ENCODE measurements at regions of chr19 and their contacts with region 1.

Region 1: DNA sequence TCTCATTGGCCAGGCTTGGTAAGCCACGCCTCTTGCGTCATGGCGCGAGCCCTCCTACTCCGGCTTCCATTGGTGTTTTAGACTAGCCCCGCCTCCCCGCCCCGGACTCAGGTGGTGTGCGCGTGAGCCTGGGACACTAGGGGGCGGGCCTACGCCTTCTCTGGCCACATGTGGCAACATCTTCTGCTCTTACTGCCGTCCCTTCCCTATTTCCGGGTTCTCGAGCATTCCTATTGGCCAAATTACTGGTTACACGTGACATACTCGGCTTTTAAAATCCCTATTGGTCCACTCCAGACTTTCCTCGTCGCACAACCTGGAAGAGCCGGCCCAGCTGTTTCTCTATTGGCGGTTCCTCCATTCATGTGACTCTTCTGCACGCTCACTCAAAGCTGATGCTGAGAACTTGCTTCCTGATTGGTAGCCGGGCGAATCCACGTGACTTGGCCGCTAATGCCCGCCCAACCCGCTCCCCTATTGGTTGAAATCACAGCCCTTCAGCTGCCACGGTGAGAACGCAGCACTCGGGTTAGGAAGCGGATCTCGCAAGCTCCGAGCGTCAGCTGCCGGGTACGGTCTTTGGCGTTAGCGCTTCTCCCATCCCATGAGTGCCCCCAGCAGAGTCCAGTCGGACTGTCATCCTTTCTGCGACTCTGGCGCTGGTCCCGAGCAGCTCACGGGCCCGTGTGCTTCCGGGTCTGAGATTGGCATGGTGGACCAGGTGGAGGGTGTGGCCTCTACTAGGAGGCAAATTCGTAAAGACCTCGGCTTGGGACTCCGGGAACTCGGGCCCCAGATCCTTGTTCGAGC is at the start of gene BLOC1S3:
- DNase-seq: peak; percentile 99 to 100 (median 100)
- ATAC-seq: peak; percentile 87
- H3K4me3 ChIP-seq: peak within 1 kb of the TSS; percentile 94 to 95
- H3K4me3 Mint-ChIP-seq: peak within 1 kb of the TSS; percentile 94
- H3K27ac ChIP-seq: peak within 1 kb of the TSS; percentile 87 to 93
- H3K27ac Mint-ChIP-seq: peak within 1 kb of the TSS; percentile 98
- H3K4me1 ChIP-seq: peaks cover 37% of the 10 kb centered on the region
- H3K4me1 Mint-ChIP-seq: peaks cover 43% of the 10 kb centered on the region
- H3K27me3 ChIP-seq: no peaks in the 10 kb centered on the region
- H3K27me3 Mint-ChIP-seq: no peaks in the 10 kb centered on the region
- CTCF ChIP-seq: no peak
- total RNA-seq, gene BLOC1S3: 17.7 to 21.6 TPM

Region 2: GRCh38 chr19:44890366-44891015 is 288.0 kb before region 1 on chr19:
- CTCF ChIA-PET with region 1: no interaction called
- POLR2A ChIA-PET with region 1: no interaction called
- intact Hi-C with region 1: loop called (anchors 1 kb)
- DNase-seq: peak in 4 of 9 experiments; percentile 100
- ATAC-seq: peak; percentile 78
- H3K4me3 ChIP-seq: peak overlapping the region; percentile 58 to 76
- H3K4me3 Mint-ChIP-seq: peak overlapping the region; percentile 85
- H3K27ac ChIP-seq: peak overlapping the region; percentile 89 to 98
- H3K27ac Mint-ChIP-seq: peak overlapping the region; percentile 94
- H3K4me1 ChIP-seq: peaks cover 20% of the 10 kb centered on the region
- H3K4me1 Mint-ChIP-seq: peaks cover 27% of the 10 kb centered on the region
- H3K27me3 ChIP-seq: no peaks in the 10 kb centered on the region
- H3K27me3 Mint-ChIP-seq: no peaks in the 10 kb centered on the region
- CTCF ChIP-seq: no peak

Region 3: DNA sequence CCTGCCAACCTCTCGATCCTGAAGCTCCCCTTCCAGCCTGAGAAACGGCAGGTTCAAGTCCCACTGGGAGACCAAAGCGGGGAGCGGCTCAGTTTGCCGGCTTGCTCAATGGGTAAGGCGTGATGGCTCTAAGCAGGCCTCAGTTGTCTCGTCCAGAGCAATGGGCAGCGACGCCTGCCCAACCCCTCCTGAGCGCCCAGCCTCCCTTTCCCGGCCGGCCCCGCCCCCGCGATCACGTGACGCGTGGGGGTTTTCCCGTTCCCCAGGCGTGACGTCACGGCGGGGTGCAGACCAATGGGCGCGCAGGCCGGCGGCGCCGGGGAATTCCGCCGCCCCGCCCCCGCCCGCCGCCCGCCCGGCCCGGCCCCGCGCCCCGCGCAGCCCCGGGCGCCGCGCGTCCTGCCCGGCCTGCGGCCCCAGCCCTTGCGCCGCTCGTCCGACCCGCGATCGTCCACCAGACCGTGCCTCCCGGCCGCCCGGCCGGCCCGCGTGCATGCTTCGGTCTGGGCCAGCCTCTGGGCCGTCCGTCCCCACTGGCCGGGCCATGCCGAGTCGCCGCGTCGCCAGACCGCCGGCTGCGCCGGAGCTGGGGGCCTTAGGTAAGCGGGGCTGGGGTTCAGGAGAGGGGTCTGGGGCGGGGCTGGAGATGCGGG is 177.3 kb before region 1 on chr19 and contains the start of gene RELB:
- CTCF ChIA-PET with region 1: no interaction called
- POLR2A ChIA-PET with region 1: interaction called, 5 read pairs
- intact Hi-C with region 1: loop called (anchors 1 kb)
- DNase-seq: peak; percentile 92 to 98 (median 95)
- ATAC-seq: peak; percentile 49
- H3K4me3 ChIP-seq: peak within 1 kb of the TSS; percentile 58 to 98
- H3K4me3 Mint-ChIP-seq: peak within 1 kb of the TSS; percentile 96
- H3K27ac ChIP-seq: peak within 1 kb of the TSS; percentile 98 to 100
- H3K27ac Mint-ChIP-seq: peak within 1 kb of the TSS; percentile 100
- H3K4me1 ChIP-seq: peaks cover 10% of the 10 kb centered on the region
- H3K4me1 Mint-ChIP-seq: peaks cover 16% of the 10 kb centered on the region
- H3K27me3 ChIP-seq: no peaks in the 10 kb centered on the region
- H3K27me3 Mint-ChIP-seq: no peaks in the 10 kb centered on the region
- CTCF ChIP-seq: no peak
- total RNA-seq, gene RELB: 168 to 179 TPM

Region 4: DNA sequence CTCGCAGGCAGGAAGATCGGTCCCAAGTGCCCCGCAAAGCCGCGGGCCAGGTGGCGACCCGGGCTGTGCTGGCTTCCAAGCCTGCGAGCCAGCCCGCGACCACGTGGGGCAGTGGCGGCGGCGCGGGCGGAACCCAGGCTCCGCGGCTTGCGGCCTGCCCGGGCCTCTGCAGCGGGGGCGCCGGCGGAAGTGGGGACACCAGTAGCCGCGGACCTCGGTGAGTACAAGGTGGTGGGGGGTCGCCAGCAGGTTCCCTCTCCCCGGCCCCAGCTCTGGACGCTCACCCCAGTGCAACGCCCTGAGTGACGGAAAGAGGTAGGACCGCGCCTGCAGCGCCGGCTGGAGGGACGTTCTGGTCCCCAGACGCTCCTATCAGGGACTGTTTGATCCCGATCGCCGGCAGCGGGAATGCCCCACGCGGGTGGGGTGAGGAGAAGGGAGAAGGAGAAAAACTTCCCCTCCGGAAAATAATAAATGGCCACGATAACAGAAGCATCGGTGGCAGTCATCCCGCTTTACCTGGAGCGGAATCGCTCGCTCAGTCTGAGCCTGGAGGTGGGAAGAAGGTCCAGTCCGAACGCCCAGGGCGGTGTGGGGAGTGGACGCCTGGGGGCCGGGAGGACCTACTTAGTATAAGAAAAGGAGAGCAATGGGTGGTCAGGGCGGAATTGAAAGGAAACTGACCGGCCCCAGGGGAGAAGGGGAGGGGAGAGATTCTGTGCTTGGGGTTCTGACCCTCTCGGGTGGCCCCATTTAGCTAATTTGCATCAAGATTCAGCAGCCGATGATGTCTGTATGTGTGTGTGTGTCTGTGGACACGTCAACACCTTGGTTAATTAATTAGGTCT is 99.2 kb before region 1 on chr19 and contains the start of gene GEMIN7:
- CTCF ChIA-PET with region 1: no interaction called
- POLR2A ChIA-PET with region 1: interaction called, 4 read pairs
- intact Hi-C with region 1: loop called (anchors 1 to 5 kb)
- DNase-seq: peak; percentile 64 to 89 (median 76)
- ATAC-seq: peak; percentile 70
- H3K4me3 ChIP-seq: peak within 1 kb of the TSS; percentile 95 to 98
- H3K4me3 Mint-ChIP-seq: peak within 1 kb of the TSS; percentile 90
- H3K27ac ChIP-seq: peak within 1 kb of the TSS; percentile 77 to 78
- H3K27ac Mint-ChIP-seq: peak within 1 kb of the TSS; percentile 81
- H3K4me1 ChIP-seq: peaks cover 46% of the 10 kb centered on the region
- H3K4me1 Mint-ChIP-seq: peaks cover 45% of the 10 kb centered on the region
- H3K27me3 ChIP-seq: no peaks in the 10 kb centered on the region
- H3K27me3 Mint-ChIP-seq: no peaks in the 10 kb centered on the region
- CTCF ChIP-seq: no peak
- total RNA-seq, gene GEMIN7: 7.2 to 7.7 TPM

Region 5: GRCh38 chr19:45152504-45153338 is 25.7 kb before region 1 on chr19:
- CTCF ChIA-PET with region 1: interaction called, 8 read pairs
- POLR2A ChIA-PET with region 1: interaction called, 13 read pairs
- intact Hi-C with region 1: loop called in 1 of 2 experiments (anchors 1 kb)
- DNase-seq: peak in 8 of 9 experiments; percentile 14 to 76 (median 50)
- ATAC-seq: peak; percentile 66
- H3K4me3 ChIP-seq: peak overlapping the region; percentile 45 to 60
- H3K4me3 Mint-ChIP-seq: peak overlapping the region; percentile 80
- H3K27ac ChIP-seq: no peak overlapping the region
- H3K27ac Mint-ChIP-seq: no peak overlapping the region
- H3K4me1 ChIP-seq: peaks cover 25% of the 10 kb centered on the region
- H3K4me1 Mint-ChIP-seq: peaks cover 17% of the 10 kb centered on the region
- H3K27me3 ChIP-seq: peaks cover 0 to 2% of the 10 kb centered on the region in 2 experiments
- H3K27me3 Mint-ChIP-seq: peaks cover 13% of the 10 kb centered on the region
- CTCF ChIP-seq: no peak

Region 6: DNA sequence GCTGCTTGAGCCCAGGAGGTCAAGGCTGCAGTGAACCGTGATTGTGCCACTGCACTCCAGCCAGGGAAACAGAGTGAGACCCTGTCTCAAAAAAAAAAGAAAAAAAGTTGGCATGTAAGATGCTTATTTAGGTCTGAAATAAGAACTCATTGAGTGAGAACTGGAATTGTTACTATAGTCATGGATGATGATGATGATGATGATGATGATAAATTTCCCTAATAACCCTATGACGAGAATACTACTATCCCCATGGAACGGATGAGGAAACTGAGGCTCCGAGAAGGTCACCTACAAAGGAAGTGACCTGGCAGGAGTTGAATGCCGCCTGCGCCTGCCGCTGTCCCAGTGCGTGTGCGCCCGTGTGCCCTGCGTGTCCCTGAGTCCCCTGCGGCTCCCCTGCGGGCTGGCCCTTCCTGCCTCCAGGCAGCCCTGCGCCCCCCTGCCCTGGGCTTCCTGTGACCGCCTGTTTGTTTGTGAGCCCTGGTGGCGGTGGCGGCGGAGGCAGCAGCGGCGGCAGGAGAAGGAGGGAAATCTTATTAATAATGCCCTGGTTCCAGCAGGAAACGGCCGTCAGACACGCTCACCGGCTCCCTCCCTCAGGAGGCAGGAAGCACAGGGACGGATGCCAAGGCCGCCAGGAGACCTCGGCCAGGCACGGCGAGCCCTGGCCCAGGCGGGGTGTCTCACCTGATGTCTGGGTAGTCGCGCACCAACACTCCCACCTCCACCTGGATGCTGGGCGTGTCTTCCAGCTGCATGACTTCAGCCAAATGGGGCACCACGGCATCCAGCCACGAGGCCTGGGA is 37.1 kb after region 1 on chr19:
- CTCF ChIA-PET with region 1: no interaction called
- POLR2A ChIA-PET with region 1: no interaction called
- intact Hi-C with region 1: no loop called
- DNase-seq: no peak
- ATAC-seq: no peak
- H3K4me3 ChIP-seq: no peak overlapping the region
- H3K4me3 Mint-ChIP-seq: no peak overlapping the region
- H3K27ac ChIP-seq: no peak overlapping the region
- H3K27ac Mint-ChIP-seq: no peak overlapping the region
- H3K4me1 ChIP-seq: no peaks in the 10 kb centered on the region
- H3K4me1 Mint-ChIP-seq: peaks cover 2% of the 10 kb centered on the region
- H3K27me3 ChIP-seq: peaks cover 0 to 14% of the 10 kb centered on the region in 2 experiments
- H3K27me3 Mint-ChIP-seq: peaks cover 32% of the 10 kb centered on the region
- CTCF ChIP-seq: no peak

Region 7: GRCh38 chr19:45506246-45506990 is 328.0 kb after region 1 on chr19:
- CTCF ChIA-PET with region 1: no interaction called
- POLR2A ChIA-PET with region 1: no interaction called
- intact Hi-C with region 1: loop called (anchors 2 to 5 kb)
- DNase-seq: peak; percentile 93 to 99 (median 97)
- ATAC-seq: peak; percentile 79
- H3K4me3 ChIP-seq: peak overlapping the region; percentile 74 to 90
- H3K4me3 Mint-ChIP-seq: peak overlapping the region; percentile 88
- H3K27ac ChIP-seq: peak overlapping the region; percentile 85 to 91
- H3K27ac Mint-ChIP-seq: peak overlapping the region; percentile 93
- H3K4me1 ChIP-seq: peaks cover 33% of the 10 kb centered on the region
- H3K4me1 Mint-ChIP-seq: peaks cover 39% of the 10 kb centered on the region
- H3K27me3 ChIP-seq: no peaks in the 10 kb centered on the region
- H3K27me3 Mint-ChIP-seq: no peaks in the 10 kb centered on the region
- CTCF ChIP-seq: peak; percentile 32

Region 8: DNA sequence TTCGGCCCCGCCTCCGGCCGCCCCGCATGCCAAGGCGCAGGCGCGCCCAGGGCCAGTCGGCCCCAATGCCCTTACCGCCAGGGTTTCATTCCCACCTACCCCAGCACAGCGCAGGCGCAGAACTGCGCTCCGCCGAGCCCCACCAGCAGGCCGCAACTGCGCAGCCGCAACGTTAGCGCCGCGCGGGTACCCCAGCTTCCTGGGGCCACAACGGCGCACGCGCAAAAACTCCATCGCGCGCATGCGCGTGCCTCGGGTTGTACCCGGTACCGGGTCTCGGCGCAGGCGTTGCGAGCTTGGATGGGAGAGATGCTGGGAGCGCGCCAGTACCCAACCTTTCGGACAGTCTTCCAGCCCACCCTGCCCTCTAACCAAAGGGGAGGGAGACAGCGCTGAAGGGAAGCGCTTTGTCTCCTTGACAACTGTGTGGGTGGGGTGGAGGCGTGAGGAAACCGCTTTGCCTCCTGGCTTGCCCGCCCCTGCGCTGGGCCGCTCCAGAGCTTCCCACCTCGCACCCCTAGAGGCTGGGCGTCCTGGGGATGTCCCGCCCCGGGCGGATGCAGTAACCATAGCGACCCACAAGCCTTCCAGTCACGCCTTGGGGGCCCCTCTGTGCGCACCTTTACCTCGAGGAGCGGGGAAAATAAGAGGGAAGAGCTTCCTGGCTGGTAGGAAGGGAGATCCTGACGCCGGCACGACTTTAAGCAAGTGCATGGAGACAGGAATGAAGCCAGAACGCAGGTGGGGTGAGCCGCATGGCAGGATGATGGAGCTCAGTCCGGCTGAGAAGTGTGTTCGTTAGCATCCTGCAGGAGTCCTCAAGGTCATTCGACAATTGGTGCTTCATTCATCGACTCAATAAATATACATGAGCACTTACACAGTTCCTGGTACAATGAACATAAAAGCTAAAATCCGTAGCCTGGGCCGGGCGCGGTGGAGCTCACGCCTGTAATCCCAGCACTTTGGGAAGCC is 724.5 kb after region 1 on chr19:
- CTCF ChIA-PET with region 1: no interaction called
- POLR2A ChIA-PET with region 1: no interaction called
- intact Hi-C with region 1: loop called in 1 of 2 experiments (anchors 1 kb)
- DNase-seq: peak; percentile 98 to 100 (median 99)
- ATAC-seq: peak; percentile 82
- H3K4me3 ChIP-seq: peak overlapping the region; percentile 76 to 83
- H3K4me3 Mint-ChIP-seq: peak overlapping the region; percentile 92
- H3K27ac ChIP-seq: peak overlapping the region; percentile 64 to 77
- H3K27ac Mint-ChIP-seq: peak overlapping the region; percentile 72
- H3K4me1 ChIP-seq: peaks cover 17% of the 10 kb centered on the region
- H3K4me1 Mint-ChIP-seq: peaks cover 26% of the 10 kb centered on the region
- H3K27me3 ChIP-seq: no peaks in the 10 kb centered on the region
- H3K27me3 Mint-ChIP-seq: no peaks in the 10 kb centered on the region
- CTCF ChIP-seq: no peak